IMR-90 (cell line): ENCODE measurements at regions of chr2 and their contacts with region 1.

Region 1: DNA sequence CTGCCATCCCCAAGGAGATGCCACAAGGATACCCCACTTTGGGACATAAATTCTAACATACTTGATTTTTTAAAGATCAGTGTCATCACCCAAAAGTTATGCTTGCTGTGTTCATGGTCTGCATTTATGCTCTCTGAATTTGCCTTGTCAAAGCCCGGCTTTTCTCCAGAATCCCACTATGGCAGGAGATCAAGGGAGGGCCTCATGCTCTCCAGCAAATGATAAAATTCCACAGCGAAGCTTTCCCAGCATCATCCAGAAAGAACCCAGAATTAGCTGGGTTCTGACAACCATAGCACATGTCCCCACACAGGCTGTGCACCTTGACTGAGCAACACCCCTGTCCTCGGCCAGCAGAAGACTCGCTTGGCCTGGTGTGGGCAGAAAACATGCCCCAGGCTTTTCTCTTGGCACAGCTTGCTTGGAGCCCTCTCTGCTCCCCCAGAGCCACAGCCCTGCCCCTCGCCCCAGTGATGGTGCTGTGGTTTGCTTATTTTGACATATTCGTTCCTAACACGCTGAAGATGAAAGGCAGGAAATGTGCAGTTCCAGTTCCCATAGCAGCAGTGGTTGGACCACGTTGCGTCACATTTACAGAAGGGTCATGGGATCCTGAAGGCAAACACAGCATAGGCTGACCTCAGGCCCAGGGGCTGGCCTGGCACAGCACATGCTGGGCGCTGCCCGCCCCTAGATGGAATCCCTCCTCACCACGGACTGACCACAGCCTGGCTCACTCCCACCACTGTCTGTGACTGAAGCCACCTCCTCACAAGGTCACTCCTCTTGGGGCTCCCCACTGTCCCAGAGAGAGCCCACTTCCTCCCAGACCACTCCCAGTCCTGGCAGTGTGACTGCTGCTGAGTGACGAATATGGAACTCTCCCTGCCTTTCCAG is 14.1 kb upstream of the CHRNA1 start:
- DNase-seq: peak; percentile 99
- ATAC-seq: peak; percentile 86
- H3K4me3 ChIP-seq: no peak overlapping the region
- H3K27ac ChIP-seq: peak overlapping the region; percentile 73
- H3K4me1 ChIP-seq: peaks cover 42% of the 10 kb centered on the region
- H3K27me3 ChIP-seq: no peaks in the 10 kb centered on the region
- CTCF ChIP-seq: no peak
- POLR2A ChIP-seq: peak; percentile 45; the same call in 1 of the 2 replicates
- RAD21 ChIP-seq: no peak; the same call in 1 of the 2 replicates

Region 2: DNA sequence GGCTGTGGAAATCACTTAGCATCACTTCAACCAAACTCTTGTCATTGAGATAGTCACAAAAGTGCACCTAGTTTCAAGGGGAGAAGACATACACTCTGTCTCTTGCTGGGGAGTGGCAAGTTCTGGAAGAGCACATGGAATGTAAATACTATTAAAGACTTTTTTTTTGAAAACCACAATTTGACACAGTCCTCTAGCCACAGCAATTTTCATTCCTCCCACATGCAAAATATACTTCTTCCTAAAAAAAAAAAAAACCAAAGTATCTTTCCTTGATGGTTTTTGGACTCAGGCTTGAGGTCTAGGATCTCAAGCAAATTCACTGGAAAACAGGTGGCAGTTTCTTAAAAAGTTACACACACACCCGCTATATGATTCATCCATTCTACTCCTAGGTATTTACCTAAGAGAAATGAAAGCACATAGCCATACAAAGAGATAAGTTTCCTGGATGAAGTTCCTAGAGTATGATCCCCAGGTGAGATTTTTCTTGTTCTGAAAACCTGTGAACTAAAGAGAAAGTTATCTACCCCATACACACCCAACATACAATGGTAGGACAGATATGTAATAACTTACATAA is 1109.0 kb before region 1 on chr2:
- CTCF ChIA-PET with region 1: no interaction called
- POLR2A ChIA-PET with region 1: no interaction called
- dilution Hi-C with region 1: no loop called
- in situ Hi-C with region 1: no loop called
- intact Hi-C with region 1: no loop called
- DNase-seq: peak; percentile 24
- ATAC-seq: peak; percentile 24; the same call in 1 of the 2 replicates
- H3K4me3 ChIP-seq: no peak overlapping the region
- H3K27ac ChIP-seq: no peak overlapping the region
- H3K4me1 ChIP-seq: peaks cover 1% of the 10 kb centered on the region; the same call in 1 of the 2 replicates
- H3K27me3 ChIP-seq: peaks cover 8% of the 10 kb centered on the region
- CTCF ChIP-seq: no peak
- POLR2A ChIP-seq: no peak
- RAD21 ChIP-seq: no peak

Region 3: DNA sequence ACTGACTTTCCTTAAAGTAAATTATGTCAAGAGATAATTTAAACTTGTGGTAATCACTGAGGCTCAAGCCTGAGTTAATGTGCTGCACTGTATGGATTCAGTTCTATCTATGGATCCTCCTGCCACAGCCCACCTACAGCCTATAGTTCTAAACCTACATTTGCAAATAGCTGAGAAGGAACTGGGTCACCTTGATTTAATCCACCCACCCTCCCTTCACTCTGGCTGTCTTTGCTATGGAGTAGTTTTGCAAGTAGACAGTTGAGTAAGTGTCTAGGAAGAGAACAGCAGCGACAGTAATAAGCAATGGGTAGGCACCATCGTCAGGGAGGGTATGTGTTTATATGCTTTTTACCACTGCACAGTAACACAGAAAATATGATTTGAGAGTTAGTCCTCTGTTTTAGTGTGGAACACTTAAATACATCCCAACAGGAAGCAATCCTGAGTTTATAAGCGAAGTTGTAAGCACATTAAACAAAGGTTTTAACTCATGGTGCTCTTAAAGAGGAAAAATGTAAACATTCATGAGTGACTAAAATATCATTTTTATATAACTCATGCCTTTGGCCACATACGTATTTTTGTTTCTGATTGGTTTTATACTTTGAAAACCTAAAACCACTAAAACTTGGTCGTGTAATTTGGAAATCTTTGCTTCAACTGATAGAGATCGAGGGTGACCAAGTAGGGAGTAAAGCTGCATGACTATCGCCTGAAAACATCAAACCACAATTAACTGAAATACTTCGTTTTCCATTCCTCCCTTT is 22.3 kb after region 1 on chr2:
- CTCF ChIA-PET with region 1: interaction called, 3 read pairs
- POLR2A ChIA-PET with region 1: no interaction called
- dilution Hi-C with region 1: no loop called
- in situ Hi-C with region 1: no loop called
- intact Hi-C with region 1: loop called (anchors 1 kb)
- DNase-seq: peak; percentile 66
- ATAC-seq: peak; percentile 69
- H3K4me3 ChIP-seq: peak overlapping the region; percentile 2; the same call in 1 of the 2 replicates
- H3K27ac ChIP-seq: peak overlapping the region; percentile 99
- H3K4me1 ChIP-seq: peaks cover 38% of the 10 kb centered on the region
- H3K27me3 ChIP-seq: no peaks in the 10 kb centered on the region
- CTCF ChIP-seq: no peak
- POLR2A ChIP-seq: no peak
- RAD21 ChIP-seq: no peak

Region 4: DNA sequence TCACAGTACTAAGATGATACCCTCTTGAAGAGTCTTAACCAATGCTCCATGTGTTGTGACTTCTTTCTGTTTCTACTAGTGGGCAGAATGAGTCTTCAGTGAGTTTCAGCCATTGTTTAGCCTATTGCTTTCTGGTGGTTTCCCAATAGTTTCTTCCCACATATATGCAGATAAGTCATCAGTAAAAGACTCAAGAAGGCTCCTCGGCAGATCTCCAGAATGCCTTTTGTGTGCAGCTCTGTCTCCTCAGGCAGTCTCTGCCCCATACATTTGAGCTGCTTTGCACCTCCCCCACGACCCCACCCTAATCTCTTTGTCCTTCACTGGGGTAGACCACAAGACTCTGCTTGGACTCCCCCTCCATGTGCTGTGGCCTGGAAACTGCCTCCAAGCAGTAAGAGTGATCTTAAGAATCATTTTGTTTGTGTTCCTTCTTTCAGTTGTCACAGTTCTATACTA is 57.5 kb after region 1 on chr2:
- CTCF ChIA-PET with region 1: interaction called, 7 read pairs
- POLR2A ChIA-PET with region 1: interaction called, 3 read pairs
- dilution Hi-C with region 1: no loop called
- in situ Hi-C with region 1: loop called (anchors 5 kb)
- intact Hi-C with region 1: no loop called
- DNase-seq: peak; percentile 97
- ATAC-seq: peak; percentile 67
- H3K4me3 ChIP-seq: no peak overlapping the region; the same call in 1 of the 2 replicates
- H3K27ac ChIP-seq: peak overlapping the region; percentile 100
- H3K4me1 ChIP-seq: peaks cover 17% of the 10 kb centered on the region
- H3K27me3 ChIP-seq: no peaks in the 10 kb centered on the region
- CTCF ChIP-seq: no peak
- POLR2A ChIP-seq: 0 out of 2 replicates have a peak, but pooled peaks have one; percentile 48
- RAD21 ChIP-seq: peak; percentile 7; the same call in 1 of the 2 replicates